Colonic mucosa (tissue), 4 donors: ENCODE measurements at regions of chr2 and their contacts with region 1.

Region 1: GRCh38 chr2:24421668-24422067 is 61.3 kb upstream of the ITSN2 start:
- DNase-seq: peak; percentile 78
- H3K4me3 ChIP-seq: no peak overlapping the region
- H3K27ac ChIP-seq: no peak overlapping the region
- H3K4me1 ChIP-seq: no peaks in the 10 kb centered on the region
- H3K27me3 ChIP-seq: no peaks in the 10 kb centered on the region
- CTCF ChIP-seq: peak; percentile 37

Region 2: DNA sequence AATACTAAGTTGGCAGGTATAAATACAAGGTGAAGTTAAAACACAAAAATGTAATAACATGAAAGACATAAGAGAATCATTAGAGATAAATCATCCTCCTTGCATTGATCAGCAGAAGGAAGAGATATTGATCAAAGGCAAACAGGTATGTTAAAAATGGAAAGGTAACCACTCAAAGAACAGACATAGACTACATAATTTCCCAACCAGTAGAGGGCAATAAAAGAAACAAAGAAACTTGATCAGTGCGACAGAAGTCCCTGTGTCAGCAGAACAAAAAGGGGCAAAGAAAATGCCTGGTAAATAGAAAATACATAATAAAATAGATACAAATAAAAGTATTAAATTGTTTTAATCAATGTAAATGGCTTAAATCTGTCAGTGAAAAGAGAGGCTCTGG is 193.2 kb before region 1 on chr2:
- intact Hi-C with region 1: no loop called
- DNase-seq: no peak
- H3K4me3 ChIP-seq: no peak overlapping the region
- H3K27ac ChIP-seq: no peak overlapping the region
- H3K4me1 ChIP-seq: no peaks in the 10 kb centered on the region
- H3K27me3 ChIP-seq: no peaks in the 10 kb centered on the region
- CTCF ChIP-seq: no peak

Region 3: GRCh38 chr2:24543252-24543651 is 121.6 kb after region 1 on chr2:
- intact Hi-C with region 1: loop called (anchors 10 kb)
- DNase-seq: peak; percentile 24
- H3K4me3 ChIP-seq: no peak overlapping the region
- H3K27ac ChIP-seq: no peak overlapping the region
- H3K4me1 ChIP-seq: no peaks in the 10 kb centered on the region
- H3K27me3 ChIP-seq: no peaks in the 10 kb centered on the region
- CTCF ChIP-seq: no peak